Gastrocnemius medialis (tissue), 4 donors: ENCODE measurements at regions of chr4 and their contacts with region 1.

Region 1: GRCh38 chr4:16289897-16290554 is 63.8 kb upstream of the TAPT1 start:
- DNase-seq: no peak
- ATAC-seq: peak in 1 of 2 donors; percentile 47
- H3K4me3 ChIP-seq: peak overlapping the region in 1 of 4 donors; percentile 14
- H3K27ac ChIP-seq: no peak overlapping the region
- H3K4me1 ChIP-seq: no peaks in the 10 kb centered on the region
- H3K27me3 ChIP-seq: no peaks in the 10 kb centered on the region
- CTCF ChIP-seq: peak; percentile 28 to 62 (median 40)
- POLR2A ChIP-seq: no peak

Region 2: GRCh38 chr4:16443504-16444088 is 153.6 kb after region 1 on chr4:
- in situ Hi-C with region 1: loop called in 1 of 4 experiments (anchors 10 kb)
- intact Hi-C with region 1: loop called (anchors 5 kb)
- DNase-seq: no peak
- ATAC-seq: no peak
- H3K4me3 ChIP-seq: no peak overlapping the region
- H3K27ac ChIP-seq: no peak overlapping the region
- H3K4me1 ChIP-seq: no peaks in the 10 kb centered on the region
- H3K27me3 ChIP-seq: no peaks in the 10 kb centered on the region
- CTCF ChIP-seq: peak in 4 of 5 experiments; percentile 11 to 44 (median 38)
- POLR2A ChIP-seq: no peak

Region 3: GRCh38 chr4:17324386-17324830 is 1034.4 kb after region 1 on chr4:
- in situ Hi-C with region 1: loop called in 3 of 4 experiments (anchors 10 to 25 kb)
- intact Hi-C with region 1: no loop called
- DNase-seq: no peak
- ATAC-seq: no peak
- H3K4me3 ChIP-seq: no peak overlapping the region
- H3K27ac ChIP-seq: no peak overlapping the region
- H3K4me1 ChIP-seq: peaks cover 0 to 4% of the 10 kb centered on the region in 2 donors
- H3K27me3 ChIP-seq: no peaks in the 10 kb centered on the region
- CTCF ChIP-seq: peak in 4 of 5 experiments; percentile 20 to 57 (median 46)
- POLR2A ChIP-seq: no peak

Region 4: GRCh38 chr4:17347445-17347844 is 1057.4 kb after region 1 on chr4:
- in situ Hi-C with region 1: loop called in 1 of 4 experiments (anchors 25 kb)
- intact Hi-C with region 1: no loop called
- DNase-seq: no peak
- ATAC-seq: no peak
- H3K4me3 ChIP-seq: no peak overlapping the region
- H3K27ac ChIP-seq: no peak overlapping the region
- H3K4me1 ChIP-seq: no peaks in the 10 kb centered on the region
- H3K27me3 ChIP-seq: no peaks in the 10 kb centered on the region
- CTCF ChIP-seq: peak in 1 of 5 experiments; percentile 28
- POLR2A ChIP-seq: no peak

Region 5: DNA sequence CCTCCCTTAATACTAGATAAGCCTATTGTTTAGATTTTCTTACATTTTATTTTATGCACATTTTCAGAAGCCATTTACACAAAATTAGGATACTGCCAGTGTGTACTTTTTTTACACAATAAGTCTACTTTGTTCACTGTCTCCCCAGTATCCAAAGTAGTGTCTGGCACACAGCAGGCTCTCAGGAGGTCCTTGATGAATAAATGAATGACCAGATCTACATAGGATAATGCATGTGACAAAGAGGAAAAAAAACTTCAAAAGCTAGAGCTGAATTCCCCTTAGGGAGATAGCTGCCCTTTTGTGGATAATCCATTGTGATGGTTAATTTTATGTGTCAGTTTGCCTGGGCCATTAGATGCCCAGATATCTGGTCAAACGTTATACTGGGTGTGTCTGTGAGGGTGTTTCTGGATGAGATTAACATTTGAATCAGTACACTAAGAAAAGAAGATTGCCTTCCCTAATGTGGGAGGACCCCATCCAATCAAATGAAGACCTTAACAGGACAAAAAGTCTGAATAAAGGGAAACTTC is 1160.3 kb after region 1 on chr4:
- in situ Hi-C with region 1: loop called (anchors 5 to 25 kb)
- intact Hi-C with region 1: no loop called
- DNase-seq: no peak
- ATAC-seq: no peak
- H3K4me3 ChIP-seq: no peak overlapping the region
- H3K27ac ChIP-seq: no peak overlapping the region
- H3K4me1 ChIP-seq: no peaks in the 10 kb centered on the region
- H3K27me3 ChIP-seq: no peaks in the 10 kb centered on the region
- CTCF ChIP-seq: no peak
- POLR2A ChIP-seq: no peak

Region 6: DNA sequence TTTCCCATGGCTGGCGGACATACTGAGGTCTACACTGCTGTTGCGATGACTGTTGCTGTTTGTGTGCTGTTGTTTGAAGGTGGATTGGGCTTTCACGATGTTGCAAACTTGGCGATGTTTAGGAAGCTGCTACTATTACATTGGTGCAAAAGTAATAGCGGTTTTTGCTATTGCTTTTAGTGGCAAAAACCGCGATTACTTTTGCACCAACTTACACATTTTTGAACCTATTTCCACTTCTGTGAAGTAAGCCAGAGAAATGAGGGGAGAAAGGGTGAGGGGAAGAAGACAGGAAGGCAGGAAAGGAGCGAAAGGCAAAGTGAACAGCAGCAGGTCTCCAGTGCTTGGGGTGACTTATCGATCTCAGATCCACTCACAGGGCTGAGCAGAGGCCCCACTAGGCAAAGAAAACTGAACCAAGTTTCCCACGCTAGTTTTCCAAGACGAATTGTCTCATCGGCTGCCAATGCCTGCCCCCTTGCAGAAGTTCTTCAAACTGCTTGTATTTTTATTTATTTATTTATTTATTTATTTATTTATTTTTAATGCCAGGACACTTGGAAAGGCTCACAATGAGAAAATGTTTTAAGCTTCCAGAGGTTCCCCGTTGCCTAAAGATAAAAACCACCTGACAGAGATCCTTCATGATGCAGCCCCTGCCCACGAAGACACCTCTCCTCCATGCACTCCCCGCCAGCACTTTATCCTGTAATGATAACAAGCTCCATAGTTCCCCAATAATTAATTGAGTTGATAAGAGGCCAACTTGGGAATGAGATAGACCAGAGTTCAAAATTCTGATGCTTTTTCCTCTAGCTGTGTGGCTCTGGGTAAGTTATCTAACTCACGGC is 1178.6 kb after region 1 on chr4:
- in situ Hi-C with region 1: loop called in 3 of 4 experiments (anchors 25 kb)
- intact Hi-C with region 1: no loop called
- DNase-seq: no peak
- ATAC-seq: peak in 1 of 2 donors; percentile 30
- H3K4me3 ChIP-seq: peak overlapping the region in 1 of 4 donors; percentile 28
- H3K27ac ChIP-seq: no peak overlapping the region
- H3K4me1 ChIP-seq: no peaks in the 10 kb centered on the region
- H3K27me3 ChIP-seq: no peaks in the 10 kb centered on the region
- CTCF ChIP-seq: peak in 2 of 5 experiments; percentile 50 to 58
- POLR2A ChIP-seq: no peak